Activated CD4-positive, alpha-beta memory T cell treated with anti-CD3 and anti-CD28 coated beads for 36 hours (primary cell): ENCODE measurements at regions of chr3 and their contacts with region 1.

Region 1: DNA sequence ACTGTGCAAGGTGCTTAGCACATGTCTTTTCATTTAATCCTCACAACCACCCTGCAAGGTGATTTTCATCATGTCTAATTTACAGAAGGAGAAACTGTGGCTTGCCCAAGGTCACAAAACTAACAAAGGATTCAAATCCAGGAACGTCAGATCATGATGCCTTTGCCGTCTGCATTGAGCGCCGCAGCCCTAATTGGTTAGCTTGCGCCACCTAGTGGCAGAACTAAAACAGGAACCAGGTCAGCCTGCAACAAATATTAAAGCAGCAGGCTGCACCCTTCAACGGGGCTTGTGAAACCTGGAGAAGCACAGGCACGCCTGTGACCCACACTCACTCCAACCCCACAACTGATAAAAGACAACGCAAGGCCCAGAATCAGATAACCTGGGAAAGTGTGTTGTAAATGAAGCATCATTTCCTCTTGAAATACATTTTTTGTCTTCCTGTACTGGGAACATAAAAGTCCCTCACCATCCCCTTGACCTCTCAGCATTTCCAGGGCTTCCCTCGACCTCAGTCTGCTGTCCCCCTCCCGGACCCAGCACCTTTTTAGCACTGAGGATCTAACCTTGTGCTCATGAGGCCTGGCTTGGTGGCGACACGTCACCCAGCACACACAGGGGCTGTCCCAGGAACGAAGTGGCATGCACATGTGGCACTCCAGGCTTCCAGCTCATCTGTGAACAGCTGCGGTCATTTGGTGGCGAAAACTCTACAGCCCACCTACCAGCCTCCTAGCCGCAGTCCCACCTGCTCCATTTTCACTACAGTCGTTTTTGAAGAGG is 17.3 kb downstream of the DPH3 start:
- DNase-seq: peak; percentile 84
- H3K4me3 Mint-ChIP-seq: no peak overlapping the region
- H3K27ac Mint-ChIP-seq: no peak overlapping the region
- H3K4me1 Mint-ChIP-seq: peaks cover 17% of the 10 kb centered on the region
- H3K27me3 Mint-ChIP-seq: no peaks in the 10 kb centered on the region

Region 2: DNA sequence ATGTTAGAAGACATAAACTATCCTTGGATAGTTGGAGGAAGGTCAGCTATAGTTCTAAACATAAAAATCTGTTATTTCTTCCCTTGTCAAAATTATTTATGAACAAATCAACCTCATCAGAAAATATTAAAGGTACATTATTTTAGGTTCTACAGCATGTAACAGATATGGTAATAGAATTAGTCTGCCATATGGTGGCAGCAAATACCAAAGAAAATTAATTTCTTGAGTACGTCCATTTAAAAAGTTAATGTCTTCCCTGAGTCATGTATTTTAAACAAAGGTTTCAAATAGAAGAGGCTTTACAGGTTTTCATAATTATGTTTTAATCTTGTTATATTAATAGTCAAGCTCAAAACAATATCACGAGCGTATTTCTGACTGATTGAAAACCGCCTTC is 431.8 kb before region 1 on chr3:
- CTCF ChIA-PET with region 1: no interaction called
- POLR2A ChIA-PET with region 1: no interaction called
- intact Hi-C with region 1: loop called (anchors 5 kb)
- DNase-seq: no peak
- H3K4me3 Mint-ChIP-seq: no peak overlapping the region
- H3K27ac Mint-ChIP-seq: no peak overlapping the region
- H3K4me1 Mint-ChIP-seq: peaks cover 48% of the 10 kb centered on the region
- H3K27me3 Mint-ChIP-seq: no peaks in the 10 kb centered on the region

Region 3: DNA sequence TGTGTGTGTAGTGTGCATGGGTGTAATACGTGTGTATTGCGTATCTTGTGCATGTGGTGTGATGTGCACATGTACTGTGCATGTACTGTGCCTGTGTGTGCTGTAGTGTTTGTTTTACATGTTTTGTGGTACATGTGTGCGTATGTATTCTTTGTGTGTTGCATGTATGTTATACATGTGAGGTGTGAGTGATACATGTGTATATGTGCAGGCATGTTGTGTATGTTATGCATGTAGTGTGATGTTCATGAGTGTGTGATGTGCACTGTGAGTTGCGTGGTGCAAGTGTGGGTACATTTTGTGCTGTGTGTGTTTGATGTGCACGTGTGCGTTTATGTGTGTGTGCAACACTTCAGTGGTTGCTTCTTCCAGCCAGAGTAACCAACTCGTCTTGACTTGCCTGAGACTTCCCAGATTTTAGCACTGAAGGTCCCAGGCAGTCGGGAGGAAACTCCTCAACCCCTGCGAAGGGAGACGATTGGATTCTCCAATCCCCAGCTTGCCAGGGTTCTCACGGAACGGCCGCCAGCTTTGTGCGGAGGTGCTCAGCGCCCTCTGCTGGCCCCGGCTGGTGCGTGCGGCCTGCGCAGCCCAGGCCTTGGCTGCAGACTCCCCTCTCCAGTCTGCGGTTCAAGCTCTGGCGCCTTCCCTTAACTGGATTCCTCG is 69.4 kb before region 1 on chr3:
- CTCF ChIA-PET with region 1: interaction called, 13 read pairs
- POLR2A ChIA-PET with region 1: no interaction called
- intact Hi-C with region 1: loop called (anchors 2 kb)
- DNase-seq: peak; percentile 74
- H3K4me3 Mint-ChIP-seq: no peak overlapping the region
- H3K27ac Mint-ChIP-seq: no peak overlapping the region
- H3K4me1 Mint-ChIP-seq: peaks cover 3% of the 10 kb centered on the region
- H3K27me3 Mint-ChIP-seq: peaks cover 13% of the 10 kb centered on the region

Region 4: DNA sequence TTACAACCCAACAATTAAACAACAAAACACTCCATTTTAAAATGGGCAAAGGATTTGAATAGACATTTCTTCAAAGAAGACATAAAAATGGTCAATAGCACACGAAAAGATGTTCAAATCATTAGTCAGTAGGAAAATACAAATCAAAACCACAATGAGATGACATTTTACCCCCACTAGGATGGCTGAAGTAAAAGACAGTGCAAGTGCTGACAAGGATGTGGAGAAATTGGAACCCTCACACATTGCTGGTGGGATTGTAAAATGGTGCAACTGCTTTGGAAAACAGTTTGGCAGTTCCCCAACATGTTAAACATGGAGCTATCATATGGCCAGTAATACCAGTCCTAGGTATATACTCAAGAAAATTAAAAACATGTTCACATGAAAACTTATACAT is 61.4 kb before region 1 on chr3:
- CTCF ChIA-PET with region 1: interaction called, 5 read pairs
- POLR2A ChIA-PET with region 1: no interaction called
- intact Hi-C with region 1: loop called (anchors 2 kb)
- DNase-seq: no peak
- H3K4me3 Mint-ChIP-seq: no peak overlapping the region
- H3K27ac Mint-ChIP-seq: no peak overlapping the region
- H3K4me1 Mint-ChIP-seq: peaks cover 2% of the 10 kb centered on the region
- H3K27me3 Mint-ChIP-seq: no peaks in the 10 kb centered on the region

Region 5: DNA sequence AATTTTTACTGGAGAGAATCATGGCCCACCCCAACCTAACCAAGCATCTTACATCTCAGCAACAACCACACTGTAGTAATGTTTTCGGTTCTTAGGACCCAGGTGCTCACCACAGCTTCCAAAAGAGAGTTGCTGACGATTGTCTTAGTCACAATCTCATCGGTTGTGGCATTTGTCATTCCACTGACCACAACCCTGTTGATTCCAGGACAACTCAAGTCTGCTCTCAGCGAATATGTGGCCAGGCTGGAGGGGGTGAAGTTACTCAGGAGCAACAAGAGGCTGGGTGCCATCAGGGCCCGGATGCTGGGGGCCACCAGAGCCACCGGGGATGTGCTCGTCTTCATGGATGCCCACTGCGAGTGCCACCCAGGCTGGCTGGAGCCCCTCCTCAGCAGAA is 47.1 kb before region 1 on chr3:
- CTCF ChIA-PET with region 1: no interaction called
- POLR2A ChIA-PET with region 1: no interaction called
- intact Hi-C with region 1: no loop called
- DNase-seq: peak; percentile 52
- H3K4me3 Mint-ChIP-seq: no peak overlapping the region
- H3K27ac Mint-ChIP-seq: no peak overlapping the region
- H3K4me1 Mint-ChIP-seq: peaks cover 19% of the 10 kb centered on the region
- H3K27me3 Mint-ChIP-seq: peaks cover 10% of the 10 kb centered on the region

Region 6: GRCh38 chr3:16211176-16211904 is 36.1 kb before region 1 on chr3:
- CTCF ChIA-PET with region 1: no interaction called
- POLR2A ChIA-PET with region 1: no interaction called
- intact Hi-C with region 1: loop called (anchors 5 kb)
- DNase-seq: no peak
- H3K4me3 Mint-ChIP-seq: no peak overlapping the region
- H3K27ac Mint-ChIP-seq: no peak overlapping the region
- H3K4me1 Mint-ChIP-seq: peaks cover 3% of the 10 kb centered on the region
- H3K27me3 Mint-ChIP-seq: no peaks in the 10 kb centered on the region

Region 7: GRCh38 chr3:16546186-16547010 is 298.9 kb after region 1 on chr3:
- CTCF ChIA-PET with region 1: no interaction called
- POLR2A ChIA-PET with region 1: no interaction called
- intact Hi-C with region 1: no loop called
- DNase-seq: no peak
- H3K4me3 Mint-ChIP-seq: no peak overlapping the region
- H3K27ac Mint-ChIP-seq: no peak overlapping the region
- H3K4me1 Mint-ChIP-seq: peaks cover 3% of the 10 kb centered on the region
- H3K27me3 Mint-ChIP-seq: peaks cover 5% of the 10 kb centered on the region